ENCODE measurements at regions of chr1 and their contacts with region 1.

Region 1: GRCh38 chr1:156444407-156445001 is 56.1 kb downstream of the MEF2D start:
- DNase-seq: no peak
- H3K4me3 Mint-ChIP-seq: no peak overlapping the region
- H3K27ac Mint-ChIP-seq: no peak overlapping the region
- H3K4me1 Mint-ChIP-seq: peaks cover 17% of the 10 kb centered on the region
- H3K27me3 Mint-ChIP-seq: peaks cover 66% of the 10 kb centered on the region

Region 2: DNA sequence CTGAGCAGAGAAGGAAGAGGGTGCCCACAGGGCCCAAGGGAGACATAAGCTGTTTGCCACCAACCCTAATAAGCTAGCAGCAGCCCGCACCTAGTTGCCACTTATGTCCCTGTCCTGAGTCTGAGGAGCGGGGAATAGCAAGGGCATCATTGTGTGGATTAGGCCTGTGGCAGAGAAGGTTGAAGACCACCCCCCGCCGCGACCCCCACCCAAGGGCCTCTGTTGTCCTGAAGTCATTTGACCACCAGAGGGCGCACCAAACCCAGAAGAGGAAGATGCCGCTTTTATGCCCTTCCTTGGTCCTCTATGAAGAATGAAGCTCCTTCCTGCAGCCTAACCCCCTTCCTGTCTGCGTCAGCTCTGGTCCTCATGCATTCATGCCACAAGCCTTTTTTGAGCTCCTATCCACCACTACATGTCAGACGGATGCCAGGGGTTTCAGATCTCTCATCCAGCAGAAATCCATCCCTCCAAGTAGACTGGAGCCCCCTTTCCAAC is 58.9 kb before region 1 on chr1:
- intact Hi-C with region 1: loop called (anchors 1 kb)
- DNase-seq: peak; percentile 61
- H3K4me3 Mint-ChIP-seq: no peak overlapping the region
- H3K27ac Mint-ChIP-seq: no peak overlapping the region
- H3K4me1 Mint-ChIP-seq: peaks cover 4% of the 10 kb centered on the region
- H3K27me3 Mint-ChIP-seq: peaks cover 34% of the 10 kb centered on the region

Measured in activated T-helper 2 cell treated with anti-CD3 and anti-CD28 coated beads, Interferon-gamma antibody, Interleukin-2, Interleukin-4, amounts not matched to agents 10 μg/mL and 5 μg/mL and 100 μg/mL, durations not matched to agents 14 hours and 24 hours and 36 hours (primary cell).